A673 (cell line): ENCODE measurements at regions of chr19 and their contacts with region 1.

Region 1: DNA sequence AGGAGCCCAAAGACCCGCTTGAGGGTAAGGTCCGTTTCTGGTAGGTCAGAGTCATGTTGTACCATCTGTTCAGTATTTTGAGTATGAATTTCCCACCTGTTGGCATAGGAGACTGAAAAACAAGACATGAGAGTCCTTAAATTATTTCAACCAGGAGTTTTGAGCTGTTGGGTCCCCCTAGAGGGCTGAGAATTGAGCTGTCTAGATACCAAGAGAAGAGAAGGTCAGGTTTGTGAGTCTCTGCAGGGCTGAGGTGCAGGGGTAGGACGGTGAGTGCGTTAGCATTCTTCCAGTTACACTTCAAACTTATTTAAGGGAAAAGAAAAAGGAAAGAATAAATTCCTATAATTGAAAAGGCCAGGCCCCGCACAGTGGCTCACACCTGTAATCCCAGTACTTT is 5.0 kb downstream of the CBLC start:
- DNase-seq: no peak
- H3K4me3 ChIP-seq: no peak overlapping the region
- H3K27ac ChIP-seq: no peak overlapping the region
- H3K4me1 ChIP-seq: no peaks in the 10 kb centered on the region
- H3K27me3 ChIP-seq: no peaks in the 10 kb centered on the region
- CTCF ChIP-seq: no peak; the same call in 1 of the 2 replicates

Region 2: DNA sequence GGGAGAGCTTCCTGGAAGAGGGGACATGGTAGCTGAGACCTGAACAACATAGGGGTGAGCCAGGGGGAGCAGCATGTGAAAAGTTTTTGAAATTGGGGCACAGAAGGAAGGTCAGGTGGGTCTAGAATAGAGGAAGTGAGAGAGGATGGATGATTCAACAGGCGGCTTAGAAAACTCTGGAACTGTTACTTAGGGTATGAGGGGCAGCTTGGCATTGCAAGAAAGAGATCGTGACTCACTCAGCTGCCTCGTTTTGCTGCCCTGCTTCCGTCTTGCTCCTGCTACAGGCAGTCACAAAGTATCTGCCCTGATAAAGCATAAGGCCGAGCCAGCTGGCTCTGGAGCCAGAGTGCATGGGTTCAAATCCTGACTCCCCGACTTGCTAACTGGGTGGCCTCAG is 252.0 kb before region 1 on chr19:
- CTCF ChIA-PET with region 1: no interaction called
- POLR2A ChIA-PET with region 1: no interaction called
- intact Hi-C with region 1: no loop called
- DNase-seq: no peak
- H3K4me3 ChIP-seq: no peak overlapping the region
- H3K27ac ChIP-seq: no peak overlapping the region
- H3K4me1 ChIP-seq: no peaks in the 10 kb centered on the region
- H3K27me3 ChIP-seq: no peaks in the 10 kb centered on the region
- CTCF ChIP-seq: no peak

Region 3: DNA sequence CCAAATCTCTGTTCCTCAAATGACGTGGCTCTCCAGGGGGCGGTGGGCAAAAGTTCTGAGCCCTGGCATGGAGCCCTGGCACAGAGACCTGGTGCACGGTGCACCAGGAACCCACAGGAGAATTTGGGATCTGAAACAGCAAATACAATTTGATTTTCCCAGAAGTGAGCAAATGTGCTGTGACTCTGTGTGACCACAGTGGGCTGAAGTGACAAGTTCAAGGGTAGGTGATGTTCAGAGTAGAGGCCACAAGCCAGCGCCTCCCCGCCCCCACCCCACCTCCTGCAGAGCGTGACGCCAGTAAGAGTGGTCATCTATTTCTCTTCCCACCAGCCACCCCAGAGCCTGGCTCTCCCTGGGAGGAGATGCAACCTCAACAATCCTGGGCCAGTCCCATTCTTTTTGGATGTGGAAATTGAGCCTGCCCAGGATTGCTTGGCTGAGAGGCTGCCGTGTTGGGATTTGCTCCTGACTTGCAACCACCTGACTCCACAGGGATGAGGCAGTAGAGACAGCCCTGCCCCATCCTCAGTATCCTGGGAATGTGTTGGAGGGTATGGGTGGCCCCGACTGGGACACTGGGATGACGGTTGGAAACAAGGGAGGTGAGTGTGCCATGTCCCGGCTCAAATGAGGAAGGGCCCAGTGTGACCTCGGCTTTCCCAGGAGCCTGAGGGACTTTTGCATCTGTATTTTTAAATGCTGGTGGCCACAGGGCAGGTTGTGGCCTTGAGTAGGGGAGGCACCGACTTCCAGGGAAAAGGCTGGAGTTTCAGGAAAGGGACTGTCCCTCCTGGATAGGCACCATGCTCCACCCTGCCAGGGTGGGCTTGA is 45.3 kb before region 1 on chr19:
- CTCF ChIA-PET with region 1: no interaction called
- POLR2A ChIA-PET with region 1: no interaction called
- intact Hi-C with region 1: no loop called
- DNase-seq: no peak
- H3K4me3 ChIP-seq: no peak overlapping the region
- H3K27ac ChIP-seq: peak overlapping the region; percentile 23
- H3K4me1 ChIP-seq: peaks cover 13% of the 10 kb centered on the region
- H3K27me3 ChIP-seq: no peaks in the 10 kb centered on the region
- CTCF ChIP-seq: no peak

Region 4: DNA sequence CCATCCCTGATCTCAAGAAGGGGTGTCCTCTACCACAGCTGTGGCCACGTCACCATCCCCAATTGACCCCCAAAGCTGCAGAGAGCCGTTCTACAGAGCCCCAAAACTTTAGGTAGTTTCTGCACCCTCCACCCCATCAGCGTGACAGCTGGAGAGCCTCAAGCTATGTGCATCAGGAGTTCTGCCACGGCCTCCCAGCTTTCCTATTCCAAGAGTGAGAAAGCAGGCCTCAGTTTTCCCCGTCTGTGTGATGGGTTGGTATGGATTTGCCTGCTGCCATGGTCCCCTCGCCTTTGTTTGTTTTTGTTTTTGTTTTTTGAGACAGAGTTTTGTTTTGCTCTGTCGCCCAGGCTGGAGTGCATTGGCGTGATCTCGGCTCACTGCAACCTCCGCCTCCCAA is 32.7 kb before region 1 on chr19:
- CTCF ChIA-PET with region 1: interaction called, 12 read pairs
- POLR2A ChIA-PET with region 1: no interaction called
- intact Hi-C with region 1: no loop called
- DNase-seq: no peak
- H3K4me3 ChIP-seq: no peak overlapping the region
- H3K27ac ChIP-seq: no peak overlapping the region
- H3K4me1 ChIP-seq: peaks cover 40% of the 10 kb centered on the region
- H3K27me3 ChIP-seq: no peaks in the 10 kb centered on the region
- CTCF ChIP-seq: no peak